Ascending aorta (tissue), 2 donors: ENCODE measurements at regions of chr3 and their contacts with region 1.

Region 1: GRCh38 chr3:48898383-48899234 is at the start of gene SLC25A20:
- DNase-seq: peak; percentile 51 to 95
- H3K4me3 ChIP-seq: peak within 1 kb of the TSS; percentile 74 to 80
- H3K27ac ChIP-seq: peak within 1 kb of the TSS; percentile 56 to 86
- H3K4me1 ChIP-seq: peaks cover 5 to 13% of the 10 kb centered on the region in 2 donors
- H3K27me3 ChIP-seq: no peaks in the 10 kb centered on the region
- CTCF ChIP-seq: no peak
- total RNA-seq, gene SLC25A20: 14.4 TPM

Region 2: GRCh38 chr3:48918388-48919214 is 20.0 kb after region 1 on chr3 and contains the start of gene ARIH2:
- intact Hi-C with region 1: loop called (anchors 1 kb)
- DNase-seq: peak; percentile 62 to 96
- H3K4me3 ChIP-seq: peak within 1 kb of the TSS; percentile 72 to 88
- H3K27ac ChIP-seq: peak within 1 kb of the TSS; percentile 95 to 98
- H3K4me1 ChIP-seq: peaks cover 0 to 9% of the 10 kb centered on the region in 2 donors
- H3K27me3 ChIP-seq: no peaks in the 10 kb centered on the region
- CTCF ChIP-seq: no peak
- total RNA-seq, gene ARIH2: 82.3 TPM

Region 3: DNA sequence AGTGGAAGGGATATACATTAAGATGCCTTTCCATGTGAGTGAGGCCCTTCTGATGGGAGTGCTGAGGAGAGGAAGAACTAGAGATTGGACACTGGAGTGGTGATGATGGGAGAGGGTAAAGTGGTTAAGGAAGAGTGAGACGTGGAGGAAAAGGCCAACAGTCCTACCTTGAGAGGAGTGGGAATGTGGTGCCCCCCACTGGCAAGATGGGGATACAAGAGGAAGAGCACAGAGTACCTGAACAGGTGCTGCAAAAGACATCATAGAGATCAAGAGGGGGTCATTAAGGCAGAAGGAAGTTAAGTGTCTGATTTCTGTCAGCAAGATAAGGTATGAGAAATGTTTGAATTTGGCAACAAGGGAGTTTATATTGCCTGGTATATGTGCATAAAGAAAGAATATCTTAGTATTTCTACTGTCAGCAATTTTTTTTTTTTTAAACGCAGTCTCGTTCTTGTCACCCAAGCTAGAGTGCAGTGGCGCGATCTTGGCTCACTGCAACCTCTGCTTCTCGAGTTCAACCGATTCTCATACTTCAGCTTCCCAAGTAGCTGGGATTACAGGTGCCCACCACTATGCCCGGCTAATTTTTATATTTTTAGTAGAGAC is 54.0 kb after region 1 on chr3:
- intact Hi-C with region 1: no loop called
- DNase-seq: no peak
- H3K4me3 ChIP-seq: no peak overlapping the region
- H3K27ac ChIP-seq: no peak overlapping the region
- H3K4me1 ChIP-seq: no peaks in the 10 kb centered on the region
- H3K27me3 ChIP-seq: no peaks in the 10 kb centered on the region
- CTCF ChIP-seq: peak in 1 of 3 experiments; percentile 24

Region 4: GRCh38 chr3:48989796-48990635 is 91.4 kb after region 1 on chr3 and contains the start of gene P4HTM:
- intact Hi-C with region 1: no loop called
- DNase-seq: peak; percentile 46 to 96
- H3K4me3 ChIP-seq: peak within 1 kb of the TSS; percentile 80 to 99
- H3K27ac ChIP-seq: peak within 1 kb of the TSS; percentile 92 to 97
- H3K4me1 ChIP-seq: peaks cover 10 to 26% of the 10 kb centered on the region in 2 donors
- H3K27me3 ChIP-seq: no peaks in the 10 kb centered on the region
- CTCF ChIP-seq: peak in 2 of 3 experiments; percentile 35 to 45
- total RNA-seq, gene P4HTM: 71.9 TPM